MCF 10A (cell line): ENCODE measurements at regions of chr11 and their contacts with region 1.

Region 1: DNA sequence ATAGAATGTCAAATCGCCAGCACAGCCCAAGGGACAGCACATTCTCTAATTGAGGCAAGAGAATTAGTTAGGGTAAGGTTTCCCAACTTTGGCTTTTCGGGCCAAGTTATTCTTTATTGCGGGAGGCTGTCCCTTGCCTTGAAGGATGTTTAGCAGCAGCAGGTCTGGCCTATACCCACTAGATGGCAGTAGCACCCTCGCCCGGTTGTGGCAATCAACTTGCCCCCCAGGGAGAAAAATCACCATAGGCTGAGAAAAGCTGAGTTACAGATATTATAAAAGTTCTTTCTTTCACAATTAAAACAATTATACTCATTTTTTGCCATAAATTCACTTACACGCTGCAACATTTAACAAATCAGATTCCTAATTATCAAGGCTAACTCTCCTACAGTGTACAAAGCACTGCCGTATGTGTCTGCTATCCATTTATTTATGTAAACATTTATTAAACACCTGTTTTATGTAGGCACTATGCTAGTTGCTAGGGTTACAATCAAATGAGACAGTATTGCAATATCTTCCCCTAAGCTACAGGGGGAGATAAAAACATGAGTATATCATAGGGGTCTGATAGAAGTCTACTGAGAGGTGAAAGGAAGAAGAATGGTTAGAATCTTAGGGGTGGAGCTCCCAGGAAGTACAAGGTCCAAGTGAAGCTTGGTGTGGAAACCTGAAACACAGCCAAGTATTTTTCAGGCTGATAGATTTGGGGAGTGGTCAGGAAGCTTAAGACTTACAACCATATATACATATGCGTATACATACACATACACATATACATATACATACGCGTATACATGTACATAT is 452.3 kb downstream of the RAB38 start:
- DNase-seq: peak; percentile 43
- H3K4me3 Mint-ChIP-seq: no peak overlapping the region
- H3K27ac Mint-ChIP-seq: no peak overlapping the region
- H3K4me1 Mint-ChIP-seq: peaks cover 11% of the 10 kb centered on the region
- H3K27me3 Mint-ChIP-seq: peaks cover 12% of the 10 kb centered on the region
- CTCF ChIP-seq: peak; percentile 84

Region 2: DNA sequence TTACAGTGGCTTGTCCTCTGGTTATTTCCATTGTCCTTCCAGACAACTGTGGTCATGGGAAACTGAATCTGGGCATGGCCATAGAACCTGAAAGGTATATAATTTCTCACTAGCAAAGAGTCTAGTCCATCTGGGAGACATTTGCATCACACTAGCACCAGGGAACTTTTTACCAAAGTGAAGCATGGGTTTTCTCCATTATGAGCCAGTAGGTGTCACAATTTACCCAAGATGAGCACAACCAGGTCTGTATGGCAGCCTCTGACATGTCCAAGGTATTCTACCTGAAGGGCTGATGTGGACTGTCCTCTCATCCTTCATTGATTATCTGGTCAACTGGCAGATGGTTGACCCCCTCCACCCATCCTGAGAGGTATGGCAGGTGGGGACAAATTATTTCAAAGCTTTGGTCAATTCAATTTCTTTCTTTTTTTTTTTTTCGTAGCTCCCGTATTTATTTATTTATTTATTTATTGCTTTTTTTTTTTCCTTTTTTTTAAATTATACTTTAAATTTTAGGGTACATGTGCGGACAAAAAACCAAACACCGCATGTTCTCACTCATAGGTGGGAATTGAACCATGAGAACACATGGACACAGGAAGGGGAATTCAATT is 259.4 kb before region 1 on chr11:
- CTCF ChIA-PET with region 1: interaction called, 15 read pairs
- POLR2A ChIA-PET with region 1: no interaction called
- intact Hi-C with region 1: loop called (anchors 2 kb)
- DNase-seq: peak; percentile 65
- H3K4me3 Mint-ChIP-seq: no peak overlapping the region
- H3K27ac Mint-ChIP-seq: no peak overlapping the region
- H3K4me1 Mint-ChIP-seq: no peaks in the 10 kb centered on the region
- H3K27me3 Mint-ChIP-seq: no peaks in the 10 kb centered on the region
- CTCF ChIP-seq: peak; percentile 61

Region 3: GRCh38 chr11:87473174-87473573 is 249.8 kb before region 1 on chr11:
- CTCF ChIA-PET with region 1: interaction called, 15 read pairs
- POLR2A ChIA-PET with region 1: no interaction called
- intact Hi-C with region 1: no loop called
- DNase-seq: peak; percentile 50
- H3K4me3 Mint-ChIP-seq: no peak overlapping the region
- H3K27ac Mint-ChIP-seq: no peak overlapping the region
- H3K4me1 Mint-ChIP-seq: peaks cover 6% of the 10 kb centered on the region
- H3K27me3 Mint-ChIP-seq: no peaks in the 10 kb centered on the region
- CTCF ChIP-seq: no peak

Region 4: GRCh38 chr11:87740968-87741367 is 18.0 kb after region 1 on chr11:
- CTCF ChIA-PET with region 1: interaction called, 8 read pairs
- POLR2A ChIA-PET with region 1: no interaction called
- intact Hi-C with region 1: loop called (anchors 1 kb)
- DNase-seq: no peak
- H3K4me3 Mint-ChIP-seq: no peak overlapping the region
- H3K27ac Mint-ChIP-seq: no peak overlapping the region
- H3K4me1 Mint-ChIP-seq: no peaks in the 10 kb centered on the region
- H3K27me3 Mint-ChIP-seq: peaks cover 17% of the 10 kb centered on the region
- CTCF ChIP-seq: no peak

Region 5: DNA sequence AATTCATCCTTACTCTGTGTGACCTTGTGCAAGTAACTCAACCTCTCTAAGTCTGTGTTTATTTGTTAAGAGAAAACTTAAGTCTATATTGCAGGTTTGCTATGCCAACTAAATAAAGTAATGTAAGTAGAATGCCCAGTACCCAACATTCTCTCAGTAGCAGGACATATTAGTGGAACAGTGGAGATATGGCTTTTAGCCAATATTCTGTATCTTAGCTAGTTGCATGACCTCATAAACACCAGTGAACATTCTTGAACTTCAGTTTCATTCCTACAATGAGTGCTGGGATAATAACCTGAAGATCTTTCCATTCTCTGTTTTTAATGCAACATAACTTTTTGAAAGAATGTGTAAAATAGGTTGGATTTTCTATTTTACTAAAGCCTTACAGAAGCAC is 375.3 kb after region 1 on chr11:
- CTCF ChIA-PET with region 1: no interaction called
- POLR2A ChIA-PET with region 1: no interaction called
- intact Hi-C with region 1: no loop called
- DNase-seq: no peak
- H3K4me3 Mint-ChIP-seq: no peak overlapping the region
- H3K27ac Mint-ChIP-seq: no peak overlapping the region
- H3K4me1 Mint-ChIP-seq: peaks cover 11% of the 10 kb centered on the region
- H3K27me3 Mint-ChIP-seq: no peaks in the 10 kb centered on the region
- CTCF ChIP-seq: no peak

Region 6: GRCh38 chr11:88886796-88887195 is 1163.8 kb after region 1 on chr11:
- CTCF ChIA-PET with region 1: interaction called, 12 read pairs
- POLR2A ChIA-PET with region 1: no interaction called
- intact Hi-C with region 1: loop called (anchors 5 kb)
- DNase-seq: peak; percentile 82
- H3K4me3 Mint-ChIP-seq: no peak overlapping the region
- H3K27ac Mint-ChIP-seq: no peak overlapping the region
- H3K4me1 Mint-ChIP-seq: no peaks in the 10 kb centered on the region
- H3K27me3 Mint-ChIP-seq: no peaks in the 10 kb centered on the region
- CTCF ChIP-seq: peak; percentile 70